ENCODE measurements at regions of chr12 and their contacts with region 1.

Region 1: GRCh38 chr12:32755654-32756475 is at the start of gene YARS2:
- DNase-seq: peak; percentile 94
- H3K4me3 ChIP-seq: peak within 1 kb of the TSS; percentile 98
- CTCF ChIP-seq: peak; percentile 77

Region 2: GRCh38 chr12:31647086-31647491 is 1108.8 kb before region 1 on chr12:
- CTCF ChIA-PET with region 1: interaction called, 20 read pairs
- POLR2A ChIA-PET with region 1: interaction called, 4 read pairs
- DNase-seq: no peak
- H3K4me3 ChIP-seq: no peak overlapping the region
- CTCF ChIP-seq: no peak

Region 3: GRCh38 chr12:32455607-32456071 is 300.2 kb before region 1 on chr12:
- CTCF ChIA-PET with region 1: interaction called, 18 read pairs
- POLR2A ChIA-PET with region 1: interaction called, 4 read pairs
- DNase-seq: peak; percentile 52
- H3K4me3 ChIP-seq: peak overlapping the region; percentile 45
- CTCF ChIP-seq: peak; percentile 26

Region 4: DNA sequence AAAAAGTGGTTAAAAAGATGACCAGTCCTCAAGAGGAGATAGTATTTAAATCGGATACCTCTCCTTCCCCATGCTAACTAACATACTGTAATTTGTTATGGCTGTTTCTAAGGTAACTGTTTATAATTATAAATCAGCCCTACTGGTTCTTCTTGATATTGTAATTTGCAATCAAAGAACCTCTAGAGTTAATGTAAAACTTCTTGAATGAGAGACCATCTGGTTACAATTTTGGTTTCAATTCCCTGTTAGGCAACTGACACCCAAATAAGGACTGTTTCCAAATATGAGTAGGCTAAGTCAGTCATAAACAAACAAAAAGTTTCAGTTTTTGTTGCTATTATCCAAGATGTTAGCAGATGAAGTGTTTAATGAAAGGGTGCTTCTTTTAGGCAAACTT is 197.0 kb before region 1 on chr12:
- CTCF ChIA-PET with region 1: no interaction called
- POLR2A ChIA-PET with region 1: no interaction called
- DNase-seq: no peak
- H3K4me3 ChIP-seq: no peak overlapping the region
- CTCF ChIP-seq: no peak

Region 5: GRCh38 chr12:32737715-32738114 is 18.1 kb before region 1 on chr12:
- CTCF ChIA-PET with region 1: interaction called, 10 read pairs
- POLR2A ChIA-PET with region 1: interaction called, 3 read pairs
- DNase-seq: no peak
- H3K4me3 ChIP-seq: no peak overlapping the region
- CTCF ChIP-seq: no peak

Region 6: DNA sequence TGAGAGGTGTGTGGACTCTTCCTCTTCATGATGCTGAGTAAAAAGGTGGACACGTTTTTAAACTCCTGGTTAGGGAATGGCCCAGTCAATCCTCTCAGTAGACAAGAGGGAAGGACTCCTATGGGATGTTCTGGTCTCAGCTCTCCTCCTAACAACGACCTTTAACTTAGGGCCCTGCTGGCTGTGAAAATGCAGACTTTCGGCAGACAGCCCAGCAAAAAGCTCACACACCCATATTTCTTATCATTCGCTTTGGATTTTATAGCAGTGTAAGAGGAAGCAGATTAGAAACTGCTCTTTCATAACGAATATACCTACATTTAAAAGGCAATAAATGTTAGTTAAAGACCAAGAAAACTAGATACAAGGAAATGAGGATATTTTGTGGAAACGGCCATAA is 17.8 kb after region 1 on chr12:
- CTCF ChIA-PET with region 1: interaction called, 10 read pairs
- POLR2A ChIA-PET with region 1: no interaction called
- DNase-seq: no peak
- H3K4me3 ChIP-seq: no peak overlapping the region
- CTCF ChIP-seq: no peak

Region 7: DNA sequence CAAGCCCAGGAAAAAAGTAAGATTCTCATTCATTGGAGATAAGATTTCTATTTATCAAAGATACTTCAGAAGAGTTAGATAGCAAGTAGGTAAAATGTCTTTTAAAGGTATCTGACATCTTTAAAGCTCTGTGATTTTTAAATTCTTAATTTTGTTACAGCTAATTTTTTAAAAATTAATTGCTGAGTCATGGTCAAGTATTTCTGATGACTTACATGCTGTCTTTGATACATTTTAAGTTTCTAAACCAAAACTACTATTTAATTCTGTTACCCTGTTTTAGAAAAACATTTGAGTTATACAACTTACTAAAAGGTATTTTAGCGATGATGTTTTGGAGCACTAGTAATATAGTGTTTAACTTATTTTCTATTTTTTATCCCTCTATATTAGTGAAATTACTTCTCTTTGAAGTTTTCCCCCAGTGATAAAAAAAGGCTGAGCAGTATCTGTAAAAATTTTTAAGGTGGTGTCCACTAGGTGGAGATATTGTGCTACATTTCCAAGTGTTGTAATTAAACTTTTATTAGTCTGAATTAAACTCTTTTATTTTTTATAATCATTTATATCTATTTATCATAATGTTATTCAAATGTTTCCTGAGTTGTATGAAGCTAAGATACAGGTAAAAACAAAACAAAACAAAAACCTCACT is 1277.9 kb after region 1 on chr12:
- CTCF ChIA-PET with region 1: interaction called, 15 read pairs
- POLR2A ChIA-PET with region 1: no interaction called
- DNase-seq: no peak
- H3K4me3 ChIP-seq: no peak overlapping the region
- CTCF ChIP-seq: no peak

Measured in AG04449 (cell line).